Psoas muscle (tissue), 8 donors: ENCODE measurements at regions of chr2 and their contacts with region 1.

Region 1: DNA sequence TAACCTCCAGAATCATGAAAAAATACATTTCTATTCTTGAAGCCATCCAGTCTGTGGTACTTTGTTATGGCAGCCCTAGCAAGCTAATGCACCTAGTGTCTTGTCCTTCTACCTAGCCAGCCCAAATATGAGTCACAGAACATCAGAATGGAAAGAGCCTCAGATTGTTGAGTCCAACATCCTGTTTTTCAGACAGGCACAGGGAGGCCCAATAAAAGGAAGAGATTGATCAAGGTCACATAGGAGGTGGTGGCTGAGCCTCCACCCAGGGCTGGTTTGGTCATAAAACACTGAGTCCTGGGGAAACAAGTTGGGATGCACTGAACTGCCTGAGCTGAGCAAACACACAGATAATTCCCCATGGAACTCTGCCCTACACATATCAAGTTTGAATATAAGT is 195.5 kb downstream of the TTC32 start:
- DNase-seq: no peak
- ATAC-seq: no peak
- H3K4me3 ChIP-seq: no peak overlapping the region
- H3K27ac ChIP-seq: no peak overlapping the region
- H3K4me1 ChIP-seq: peaks cover 17% of the 10 kb centered on the region
- H3K27me3 ChIP-seq: no peaks in the 10 kb centered on the region
- CTCF ChIP-seq: no peak

Region 2: DNA sequence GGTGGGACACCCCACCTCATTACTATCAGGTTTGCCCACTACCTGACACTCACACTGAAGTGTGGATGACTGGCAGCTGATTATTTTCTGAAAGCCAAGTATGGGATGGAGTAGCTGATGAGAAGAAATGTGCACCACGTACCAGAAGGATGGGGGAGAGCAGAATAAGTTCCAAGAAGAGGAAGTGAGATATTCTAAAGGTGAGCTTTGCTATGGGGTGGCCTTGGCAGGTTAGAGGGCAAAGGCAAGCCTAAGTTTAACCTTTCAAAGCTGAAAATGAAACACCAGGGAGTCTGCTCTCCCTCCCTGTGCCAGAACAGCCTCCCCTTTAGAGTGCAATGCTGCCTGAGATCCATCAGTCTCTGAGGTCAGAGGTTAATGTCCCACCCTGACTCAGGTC is 151.8 kb before region 1 on chr2:
- intact Hi-C with region 1: no loop called
- DNase-seq: no peak
- ATAC-seq: no peak
- H3K4me3 ChIP-seq: no peak overlapping the region
- H3K27ac ChIP-seq: no peak overlapping the region
- H3K4me1 ChIP-seq: no peaks in the 10 kb centered on the region
- H3K27me3 ChIP-seq: peaks cover 0 to 3% (median 0%) of the 10 kb centered on the region in 3 donors
- CTCF ChIP-seq: no peak

Region 3: GRCh38 chr2:20130821-20131645 is 424.7 kb after region 1 on chr2:
- intact Hi-C with region 1: no loop called
- DNase-seq: no peak
- ATAC-seq: no peak
- H3K4me3 ChIP-seq: no peak overlapping the region
- H3K27ac ChIP-seq: no peak overlapping the region
- H3K4me1 ChIP-seq: no peaks in the 10 kb centered on the region
- H3K27me3 ChIP-seq: peaks cover 0 to 2% (median 0%) of the 10 kb centered on the region in 3 donors
- CTCF ChIP-seq: no peak

Region 4: DNA sequence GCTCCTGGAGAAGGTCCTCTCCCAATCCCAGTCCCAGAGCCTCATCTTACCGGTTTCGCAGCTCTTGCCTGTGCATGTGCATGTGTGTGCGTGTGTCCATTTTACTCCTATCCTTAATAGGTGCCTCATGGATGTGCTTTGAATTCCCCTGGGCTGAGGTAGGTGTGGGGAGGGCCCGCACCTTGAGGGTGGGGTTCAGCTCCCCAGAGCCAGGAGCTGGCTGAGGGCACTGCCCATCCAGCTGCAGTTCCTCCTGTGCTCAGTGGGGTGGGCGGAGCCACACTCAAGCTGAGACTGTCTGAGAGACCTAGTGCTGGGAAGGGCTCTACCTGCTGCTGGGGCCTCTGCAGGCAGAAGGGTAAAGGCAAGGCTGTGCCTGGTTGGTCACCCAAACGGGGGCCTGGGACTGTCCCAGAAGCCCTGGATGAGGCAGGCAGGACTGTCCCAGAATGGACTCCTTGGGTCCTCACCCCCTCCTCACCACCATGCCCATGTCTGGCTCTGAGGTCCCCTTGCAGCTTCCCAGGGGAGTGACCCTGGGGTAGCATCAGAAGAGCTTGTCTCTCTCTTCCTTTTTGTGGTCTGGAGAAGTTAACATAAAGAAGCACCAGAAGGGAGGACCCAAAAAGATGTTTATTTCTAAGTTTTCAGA is 969.5 kb after region 1 on chr2:
- intact Hi-C with region 1: loop called in 1 of 2 experiments (anchors 5 kb)
- DNase-seq: no peak
- ATAC-seq: peak in 1 of 4 donors; percentile 8
- H3K4me3 ChIP-seq: no peak overlapping the region
- H3K27ac ChIP-seq: no peak overlapping the region
- H3K4me1 ChIP-seq: no peaks in the 10 kb centered on the region
- H3K27me3 ChIP-seq: peaks cover 0 to 37% (median 14%) of the 10 kb centered on the region in 3 donors
- CTCF ChIP-seq: no peak